Breast epithelium (tissue), 4 donors: ENCODE measurements at regions of chr1 and their contacts with region 1.

Region 1: GRCh38 chr1:212822956-212823355 is 24.5 kb downstream of the SPATA45 start:
- DNase-seq: no peak
- H3K4me3 ChIP-seq: no peak overlapping the region
- H3K27ac ChIP-seq: no peak overlapping the region
- H3K4me1 ChIP-seq: no peaks in the 10 kb centered on the region
- H3K27me3 ChIP-seq: no peaks in the 10 kb centered on the region
- CTCF ChIP-seq: no peak
- POLR2A ChIP-seq: no peak

Region 2: GRCh38 chr1:212853658-212854057 is 30.7 kb after region 1 on chr1:
- intact Hi-C with region 1: loop called (anchors 2 kb)
- DNase-seq: no peak
- H3K4me3 ChIP-seq: no peak overlapping the region
- H3K27ac ChIP-seq: no peak overlapping the region
- H3K4me1 ChIP-seq: no peaks in the 10 kb centered on the region
- H3K27me3 ChIP-seq: no peaks in the 10 kb centered on the region
- CTCF ChIP-seq: no peak
- POLR2A ChIP-seq: no peak

Region 3: GRCh38 chr1:212884592-212884991 is 61.6 kb after region 1 on chr1:
- intact Hi-C with region 1: loop called (anchors 2 kb)
- DNase-seq: no peak
- H3K4me3 ChIP-seq: no peak overlapping the region
- H3K27ac ChIP-seq: no peak overlapping the region
- H3K4me1 ChIP-seq: no peaks in the 10 kb centered on the region
- H3K27me3 ChIP-seq: no peaks in the 10 kb centered on the region
- CTCF ChIP-seq: no peak
- POLR2A ChIP-seq: no peak